ENCODE measurements at regions of chr9 and their contacts with region 1.

Region 1: GRCh38 chr9:109520478-109521132 is 22.5 kb upstream of the PTPN3 start:
- DNase-seq: peak; percentile 43 to 80
- H3K4me3 ChIP-seq: no peak overlapping the region
- H3K27ac ChIP-seq: no peak overlapping the region
- H3K4me1 ChIP-seq: no peaks in the 10 kb centered on the region
- H3K27me3 ChIP-seq: no peaks in the 10 kb centered on the region
- CTCF ChIP-seq: peak; percentile 55 to 98 (median 87)
- EP300 ChIP-seq: no peak
- POLR2A ChIP-seq: no peak
- RAD21 ChIP-seq: peak; percentile 95 to 97

Region 2: GRCh38 chr9:109274884-109275730 is 245.5 kb before region 1 on chr9:
- CTCF ChIA-PET with region 1: no interaction called
- POLR2A ChIA-PET with region 1: no interaction called
- DNase-seq: no peak
- H3K4me3 ChIP-seq: no peak overlapping the region
- H3K27ac ChIP-seq: no peak overlapping the region
- H3K4me1 ChIP-seq: peaks cover 0 to 4% (median 4%) of the 10 kb centered on the region in 4 experiments; a peak in 6 of 7 replicates
- H3K27me3 ChIP-seq: no peaks in the 10 kb centered on the region
- CTCF ChIP-seq: no peak
- EP300 ChIP-seq: no peak
- POLR2A ChIP-seq: no peak
- RAD21 ChIP-seq: no peak

Region 3: DNA sequence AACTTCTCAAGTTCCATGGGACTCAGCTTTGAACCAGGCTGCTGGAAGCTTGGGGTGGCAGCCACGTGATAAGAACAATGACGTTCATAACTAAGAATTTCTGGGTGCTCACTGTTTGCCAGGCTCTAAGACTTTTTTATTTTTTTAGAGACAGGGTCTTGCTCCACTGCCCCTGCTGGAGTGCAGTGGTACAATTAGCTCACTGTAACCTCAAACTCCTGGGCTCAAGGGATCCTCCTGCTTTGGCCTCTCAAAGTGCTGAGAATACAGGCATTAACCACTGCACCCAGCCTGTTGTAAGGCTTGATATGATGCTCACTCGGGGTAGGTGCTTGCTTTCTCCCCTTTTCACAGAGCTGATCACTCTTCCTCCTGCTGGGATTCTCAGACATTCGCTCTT is 61.2 kb before region 1 on chr9:
- CTCF ChIA-PET with region 1: interaction called, 12 read pairs
- POLR2A ChIA-PET with region 1: no interaction called
- DNase-seq: no peak
- H3K4me3 ChIP-seq: no peak overlapping the region
- H3K27ac ChIP-seq: no peak overlapping the region
- H3K4me1 ChIP-seq: peaks cover 0 to 6% (median 1%) of the 10 kb centered on the region in 4 experiments; a peak in 3 of 7 replicates
- H3K27me3 ChIP-seq: no peaks in the 10 kb centered on the region
- CTCF ChIP-seq: no peak
- EP300 ChIP-seq: no peak
- POLR2A ChIP-seq: no peak
- RAD21 ChIP-seq: no peak

Region 4: DNA sequence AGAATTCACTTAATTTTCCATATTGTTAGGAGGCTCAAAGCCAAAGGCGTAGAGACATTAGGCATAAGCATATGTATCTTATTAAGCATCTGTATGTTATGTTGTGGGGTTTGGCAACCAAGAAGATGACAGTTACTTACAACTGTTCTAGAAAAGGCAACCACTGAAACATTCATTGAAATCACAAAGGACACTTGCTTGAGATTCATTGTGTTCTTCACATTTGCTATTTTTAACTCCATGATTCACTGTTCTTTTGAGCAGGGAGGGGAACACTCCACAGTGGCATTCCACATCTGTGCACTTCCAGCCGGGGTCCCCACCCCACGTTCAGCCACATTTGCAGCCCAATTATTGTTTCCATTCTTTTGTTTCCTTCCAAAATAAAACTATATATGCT is 366.5 kb after region 1 on chr9:
- CTCF ChIA-PET with region 1: no interaction called
- POLR2A ChIA-PET with region 1: no interaction called
- DNase-seq: no peak
- H3K4me3 ChIP-seq: no peak overlapping the region
- H3K27ac ChIP-seq: no peak overlapping the region
- H3K4me1 ChIP-seq: peaks cover 0 to 3% (median 0%) of the 10 kb centered on the region in 4 experiments; a peak in 1 of 7 replicates
- H3K27me3 ChIP-seq: no peaks in the 10 kb centered on the region
- CTCF ChIP-seq: no peak
- EP300 ChIP-seq: no peak
- POLR2A ChIP-seq: no peak
- RAD21 ChIP-seq: no peak